Activated naive CD8-positive, alpha-beta T cell treated with anti-CD3 and anti-CD28 coated beads, Interleukin-2, amount 10 ng/mL, durations not matched to agents 7 days and 5 days (primary cell): ENCODE measurements at regions of chr6 and their contacts with region 1.

Region 1: DNA sequence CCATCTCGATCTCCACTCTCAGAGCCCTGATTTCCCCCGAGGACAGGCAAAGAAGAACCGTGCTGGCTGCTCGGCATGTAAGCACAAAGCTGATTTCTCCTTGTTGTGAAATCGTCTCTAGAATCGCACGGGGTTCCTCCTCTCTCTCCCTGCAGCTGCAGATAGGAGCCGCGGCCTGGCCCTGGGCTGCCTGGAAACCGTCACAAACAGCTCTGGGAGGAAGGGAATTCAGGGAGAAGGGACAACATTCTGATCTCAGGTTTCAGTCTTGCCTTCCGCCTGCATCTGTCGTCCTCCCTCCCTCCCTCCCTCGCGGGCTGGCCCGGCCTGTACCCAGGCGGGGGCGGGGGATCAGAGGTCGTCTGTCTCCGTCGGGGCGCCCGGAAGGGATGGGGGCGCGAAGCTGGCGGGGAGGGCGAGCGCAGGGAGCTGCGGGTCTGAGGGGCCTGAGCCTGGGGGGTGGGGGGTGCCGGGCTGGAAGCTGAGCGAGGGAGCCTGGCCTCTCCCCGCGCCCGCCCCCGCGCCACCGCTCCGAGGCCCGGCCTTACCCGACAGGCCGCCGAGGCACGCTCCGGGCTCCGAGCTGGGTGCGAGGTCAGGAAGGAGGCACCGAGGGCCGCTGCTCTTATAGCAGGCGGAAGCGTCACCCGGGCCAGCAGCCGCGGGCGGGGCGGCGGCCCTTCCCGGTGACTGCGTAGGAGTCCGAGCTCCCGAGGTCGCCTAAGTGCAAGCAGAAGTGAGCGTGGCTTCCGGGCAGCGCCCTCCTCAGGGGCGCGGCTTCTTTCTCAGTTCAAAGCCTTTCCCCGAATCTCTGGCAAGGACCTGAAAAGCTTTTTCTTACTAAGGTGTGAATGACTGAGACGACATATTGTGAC is at the start of gene SERPINB1:
- DNase-seq: peak; percentile 85
- ATAC-seq: peak; percentile 88
- H3K4me3 Mint-ChIP-seq: peak within 1 kb of the TSS; percentile 83
- H3K27ac Mint-ChIP-seq: peak within 1 kb of the TSS; percentile 87
- H3K4me1 Mint-ChIP-seq: peaks cover 38% of the 10 kb centered on the region
- H3K27me3 Mint-ChIP-seq: no peaks in the 10 kb centered on the region
- total RNA-seq, gene SERPINB1: 58.6 to 59.8 TPM

Region 2: GRCh38 chr6:2765166-2765895 is 76.2 kb before region 1 on chr6 and contains the start of gene WRNIP1:
- POLR2A ChIA-PET with region 1: interaction called, 27 read pairs
- DNase-seq: peak; percentile 95
- ATAC-seq: peak; percentile 89
- H3K4me3 Mint-ChIP-seq: peak within 1 kb of the TSS; percentile 94
- H3K27ac Mint-ChIP-seq: peak within 1 kb of the TSS; percentile 95
- H3K4me1 Mint-ChIP-seq: peaks cover 41% of the 10 kb centered on the region
- H3K27me3 Mint-ChIP-seq: no peaks in the 10 kb centered on the region
- total RNA-seq, gene WRNIP1: 45.4 to 46.7 TPM

Region 3: GRCh38 chr6:2777250-2777649 is 64.3 kb before region 1 on chr6:
- POLR2A ChIA-PET with region 1: no interaction called
- DNase-seq: no peak
- ATAC-seq: no peak
- H3K4me3 Mint-ChIP-seq: no peak overlapping the region
- H3K27ac Mint-ChIP-seq: no peak overlapping the region
- H3K4me1 Mint-ChIP-seq: peaks cover 14% of the 10 kb centered on the region
- H3K27me3 Mint-ChIP-seq: no peaks in the 10 kb centered on the region

Region 4: DNA sequence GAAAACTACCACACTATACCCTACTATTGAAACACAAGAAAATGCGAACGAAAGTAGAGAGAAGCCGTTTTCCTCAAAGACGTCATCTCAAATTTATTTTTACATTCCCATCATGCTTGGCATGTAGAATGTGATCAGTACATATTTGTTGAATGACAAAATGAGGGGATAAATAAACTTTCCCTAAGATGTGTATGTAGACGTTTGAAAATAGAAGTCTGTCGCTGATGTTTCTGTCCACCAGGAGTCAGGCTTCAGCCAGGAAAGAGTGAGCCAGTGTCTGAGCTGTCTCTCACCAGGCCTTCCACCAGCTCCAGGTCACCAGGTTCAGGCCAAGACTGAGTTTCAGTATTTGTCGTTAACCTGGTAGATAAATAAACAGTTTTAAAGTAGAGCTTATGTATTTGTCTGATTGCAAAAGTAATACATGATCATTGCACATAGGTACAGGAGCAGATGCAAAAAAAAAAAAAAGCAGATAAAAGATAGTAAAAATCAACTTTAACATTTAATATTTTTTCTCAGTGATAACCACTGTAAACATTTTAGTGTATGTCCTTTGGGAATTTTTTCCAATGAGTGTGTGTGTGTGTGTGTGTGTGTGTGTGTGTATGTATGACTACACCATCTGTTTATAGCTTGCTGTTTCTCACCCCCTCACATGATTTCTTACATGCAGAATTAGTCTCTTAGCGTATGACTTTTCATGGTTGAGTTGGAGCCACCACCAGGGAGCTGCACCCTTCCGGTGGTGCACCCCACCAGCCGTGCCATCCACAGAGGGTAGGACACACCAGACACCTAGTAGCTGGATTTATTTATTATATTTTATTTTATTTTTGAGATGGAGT is 50.2 kb before region 1 on chr6:
- POLR2A ChIA-PET with region 1: interaction called, 29 read pairs
- DNase-seq: no peak
- ATAC-seq: peak; percentile 75
- H3K4me3 Mint-ChIP-seq: peak overlapping the region; percentile 46
- H3K27ac Mint-ChIP-seq: peak overlapping the region; percentile 80
- H3K4me1 Mint-ChIP-seq: peaks cover 25% of the 10 kb centered on the region
- H3K27me3 Mint-ChIP-seq: no peaks in the 10 kb centered on the region

Region 5: DNA sequence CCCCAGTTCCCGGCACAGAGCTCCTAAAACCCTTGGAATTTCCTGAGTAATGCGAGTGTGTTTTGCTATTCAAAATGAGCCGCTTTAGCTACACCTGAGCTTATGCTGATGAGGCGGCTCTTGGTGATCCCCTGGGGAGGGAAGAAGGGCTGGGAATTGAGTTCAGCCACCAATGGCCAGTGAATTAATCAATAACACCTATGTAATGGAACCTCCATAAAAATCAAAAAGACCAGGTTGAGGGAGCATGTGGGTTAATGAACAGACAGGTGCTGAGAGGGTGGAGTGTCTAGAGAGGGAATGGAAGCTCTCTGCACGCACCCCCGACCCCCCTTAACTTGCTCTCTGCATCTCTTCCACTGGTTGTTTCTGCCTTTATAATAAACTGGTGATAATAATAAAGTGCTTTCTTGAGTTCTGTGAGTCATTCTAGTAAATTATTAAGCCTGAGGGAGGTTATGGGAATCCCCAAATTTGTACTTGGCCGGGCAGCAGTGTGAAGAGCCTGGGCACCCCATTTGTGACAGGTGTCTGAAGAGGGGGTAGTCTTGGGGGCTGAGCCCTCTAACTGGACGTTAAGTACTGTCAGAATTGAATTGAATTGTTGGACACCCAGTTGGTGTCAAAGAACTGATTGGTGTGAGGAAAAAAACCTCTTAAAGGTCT is 24.8 kb after region 1 on chr6:
- POLR2A ChIA-PET with region 1: no interaction called
- DNase-seq: no peak
- ATAC-seq: no peak
- H3K4me3 Mint-ChIP-seq: no peak overlapping the region
- H3K27ac Mint-ChIP-seq: no peak overlapping the region
- H3K4me1 Mint-ChIP-seq: peaks cover 39% of the 10 kb centered on the region
- H3K27me3 Mint-ChIP-seq: no peaks in the 10 kb centered on the region